ENCODE measurements at regions of chr11 and their contacts with region 1.

Region 1: GRCh38 chr11:47355283-47356128 is 3.0 kb upstream of the MYBPC3 start:
- DNase-seq: peak; percentile 95 to 97
- ATAC-seq: peak; percentile 35 to 63 (median 56)
- H3K4me3 ChIP-seq: peak overlapping the region; percentile 32 to 63 (median 47)
- H3K27ac ChIP-seq: peak overlapping the region; percentile 81 to 99 (median 94)
- H3K4me1 ChIP-seq: peaks cover 0 to 26% (median 4%) of the 10 kb centered on the region in 9 donors
- H3K27me3 ChIP-seq: no peaks in the 10 kb centered on the region
- CTCF ChIP-seq: peak; percentile 85 to 98 (median 94)

Region 2: GRCh38 chr11:46889689-46890475 is 465.6 kb before region 1 on chr11:
- intact Hi-C with region 1: loop called in 6 of 10 experiments (anchors 2 to 10 kb)
- DNase-seq: peak in 1 of 2 donors; percentile 76
- ATAC-seq: peak; percentile 46 to 86 (median 77)
- H3K4me3 ChIP-seq: no peak overlapping the region
- H3K27ac ChIP-seq: no peak overlapping the region
- H3K4me1 ChIP-seq: no peaks in the 10 kb centered on the region
- H3K27me3 ChIP-seq: no peaks in the 10 kb centered on the region
- CTCF ChIP-seq: peak; percentile 65 to 90 (median 84)

Region 3: DNA sequence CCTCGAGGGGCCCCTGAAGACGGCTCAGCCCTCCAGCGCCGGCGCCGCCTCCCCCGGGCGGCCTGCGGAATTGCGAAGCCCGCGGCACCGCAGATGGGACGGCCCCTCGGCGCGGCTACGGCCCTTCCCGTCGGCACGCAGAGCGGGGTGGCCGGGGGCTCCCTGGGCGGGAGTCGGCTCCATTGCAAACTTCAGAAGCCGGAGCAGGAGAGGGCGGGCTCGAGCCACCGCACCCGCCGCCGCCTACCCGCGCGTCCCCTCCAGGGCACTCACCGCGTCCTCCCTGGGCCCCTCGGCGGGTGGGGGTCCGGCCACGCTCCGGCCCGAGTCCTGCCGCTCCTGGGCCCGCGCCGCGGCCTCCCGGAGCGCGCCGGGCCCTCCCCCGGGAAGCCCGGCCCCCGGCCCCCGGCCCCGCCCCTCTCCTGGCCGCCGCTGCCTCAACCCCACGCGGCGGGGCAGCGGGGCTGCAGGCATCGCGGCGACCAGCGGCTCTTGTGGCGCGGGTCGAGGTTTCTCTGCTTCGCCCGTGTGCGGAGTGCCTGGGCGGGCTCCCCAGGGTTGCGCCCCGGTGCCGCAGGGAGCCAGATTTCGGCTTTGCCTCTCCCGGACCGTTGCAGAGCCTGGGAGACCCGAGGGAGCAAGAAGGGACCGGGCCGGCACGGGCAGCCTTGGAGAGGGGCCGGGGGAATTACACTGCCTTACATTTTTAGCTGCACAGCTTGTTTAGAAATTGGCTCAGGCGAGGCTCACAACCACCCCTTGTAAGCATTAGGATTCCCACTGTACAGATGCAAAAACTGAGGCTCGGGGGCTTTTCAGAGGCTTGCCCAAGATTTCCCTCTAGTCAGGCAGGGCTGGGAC is 169.2 kb before region 1 on chr11 and contains the start of gene PACSIN3:
- intact Hi-C with region 1: loop called in 5 of 10 experiments (anchors 2 to 10 kb)
- DNase-seq: peak; percentile 43 to 71
- ATAC-seq: peak; percentile 7 to 61 (median 37)
- H3K4me3 ChIP-seq: peak within 1 kb of the TSS; percentile 63 to 85 (median 72)
- H3K27ac ChIP-seq: peak within 1 kb of the TSS; percentile 89 to 100 (median 96)
- H3K4me1 ChIP-seq: peaks cover 9 to 75% (median 52%) of the 10 kb centered on the region in 9 donors
- H3K27me3 ChIP-seq: peaks cover 0 to 50% (median 0%) of the 10 kb centered on the region in 7 donors
- CTCF ChIP-seq: peak in 2 of 9 donors; percentile 14 to 26
- total RNA-seq, gene PACSIN3: 146 to 335 (median 257) TPM

Region 4: DNA sequence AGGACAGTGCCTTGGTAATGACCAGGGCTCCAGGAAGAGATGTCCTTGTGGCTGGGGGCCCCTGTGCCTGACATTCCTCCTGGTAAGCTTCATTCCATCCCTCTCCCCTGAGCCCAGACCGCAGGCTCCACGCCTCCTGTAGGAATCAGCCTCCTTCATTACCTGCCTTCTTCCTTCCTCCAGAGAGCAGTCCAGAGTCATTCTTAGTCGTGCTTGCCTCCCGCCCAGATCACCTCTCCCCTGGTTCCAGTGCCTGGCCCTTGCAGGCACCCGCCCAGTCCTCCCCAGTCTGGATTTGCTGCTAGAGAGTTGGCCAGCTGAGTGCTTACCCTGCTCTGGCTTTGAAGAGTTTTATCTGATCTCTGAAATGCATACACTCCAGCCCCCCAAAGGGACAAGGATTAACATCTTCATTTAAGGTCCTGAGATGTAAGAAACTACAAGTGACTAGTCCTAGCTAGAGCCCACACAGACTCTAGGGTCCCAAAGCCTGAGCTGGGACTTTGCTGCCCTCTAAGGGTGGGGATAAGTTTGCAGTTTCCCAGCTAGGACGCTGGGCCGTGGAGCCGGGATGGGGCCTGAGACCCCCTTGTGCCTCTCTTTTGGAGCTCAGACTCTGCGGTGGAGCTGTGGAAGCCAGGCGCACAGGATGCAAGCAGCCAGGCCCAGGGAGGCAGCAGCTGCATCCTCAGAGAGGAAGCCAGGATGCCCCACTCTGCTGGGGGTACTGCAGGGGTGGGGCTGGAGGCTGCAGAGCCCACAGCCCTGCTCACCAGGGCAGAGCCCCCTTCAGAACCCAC is 96.1 kb before region 1 on chr11:
- intact Hi-C with region 1: loop called in 4 of 10 experiments (anchors 2 to 5 kb)
- DNase-seq: peak in 1 of 2 donors; percentile 45
- ATAC-seq: peak in 6 of 8 donors; percentile 24 to 51 (median 40)
- H3K4me3 ChIP-seq: peak overlapping the region in 6 of 10 donors; percentile 11 to 53 (median 49)
- H3K27ac ChIP-seq: peak overlapping the region in 7 of 10 donors; percentile 19 to 88 (median 83)
- H3K4me1 ChIP-seq: peaks cover 24 to 63% (median 55%) of the 10 kb centered on the region in 9 donors
- H3K27me3 ChIP-seq: no peaks in the 10 kb centered on the region
- CTCF ChIP-seq: peak; percentile 62 to 78 (median 73)

Region 5: DNA sequence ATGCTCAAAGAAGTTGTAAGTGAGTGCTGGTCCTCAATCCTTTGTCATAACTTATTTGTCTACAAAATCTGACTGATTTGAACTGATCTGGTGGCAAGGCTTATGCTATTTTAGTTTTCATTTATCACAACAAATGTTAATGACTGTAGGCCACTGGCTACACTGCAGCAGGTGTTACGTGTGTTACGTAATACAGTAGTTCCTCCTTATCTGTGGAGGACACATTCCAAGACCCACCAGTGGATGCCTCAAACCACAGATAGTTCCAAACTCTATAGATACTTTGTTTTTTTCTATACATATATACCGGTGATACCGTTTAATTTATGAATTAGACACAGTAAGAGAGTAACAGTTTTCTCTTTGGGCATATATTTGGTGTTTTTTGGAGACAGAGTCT is 78.6 kb before region 1 on chr11:
- intact Hi-C with region 1: loop called in 6 of 10 experiments (anchors 5 to 10 kb)
- DNase-seq: no peak
- ATAC-seq: no peak
- H3K4me3 ChIP-seq: no peak overlapping the region
- H3K27ac ChIP-seq: no peak overlapping the region
- H3K4me1 ChIP-seq: peaks cover 4 to 41% (median 22%) of the 10 kb centered on the region in 9 donors
- H3K27me3 ChIP-seq: no peaks in the 10 kb centered on the region
- CTCF ChIP-seq: no peak

Region 6: DNA sequence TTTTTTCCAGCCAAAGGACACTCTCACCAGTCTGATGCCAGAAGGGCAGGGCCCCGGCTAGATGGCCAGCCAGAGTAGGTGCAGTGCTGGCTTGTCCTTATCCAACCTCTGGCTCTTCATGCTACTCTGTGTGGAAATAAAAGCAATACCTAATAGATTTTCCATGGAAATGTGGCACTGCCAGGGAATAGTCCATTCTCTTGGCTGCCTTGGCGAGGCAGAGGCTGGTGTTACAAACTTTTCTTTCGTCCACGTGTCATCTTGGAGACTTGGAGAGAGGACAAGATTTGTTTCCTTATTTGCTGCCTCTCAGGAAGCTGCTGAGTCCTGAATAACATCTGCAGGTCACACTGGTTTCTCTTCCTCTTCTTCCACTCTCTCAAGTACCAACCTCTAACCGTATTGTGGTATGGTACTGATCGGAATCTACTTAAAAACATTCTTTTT is 255.9 kb after region 1 on chr11:
- intact Hi-C with region 1: no loop called
- DNase-seq: no peak
- ATAC-seq: peak in 5 of 8 donors; percentile 26 to 59 (median 48)
- H3K4me3 ChIP-seq: no peak overlapping the region
- H3K27ac ChIP-seq: peak overlapping the region in 1 of 10 donors; percentile 12
- H3K4me1 ChIP-seq: peaks cover 5 to 38% (median 25%) of the 10 kb centered on the region in 9 donors
- H3K27me3 ChIP-seq: no peaks in the 10 kb centered on the region
- CTCF ChIP-seq: no peak

Measured in heart right ventricle (tissue), 16 donors.